ENCODE measurements at regions of chr15 and their contacts with region 1.

Region 1: DNA sequence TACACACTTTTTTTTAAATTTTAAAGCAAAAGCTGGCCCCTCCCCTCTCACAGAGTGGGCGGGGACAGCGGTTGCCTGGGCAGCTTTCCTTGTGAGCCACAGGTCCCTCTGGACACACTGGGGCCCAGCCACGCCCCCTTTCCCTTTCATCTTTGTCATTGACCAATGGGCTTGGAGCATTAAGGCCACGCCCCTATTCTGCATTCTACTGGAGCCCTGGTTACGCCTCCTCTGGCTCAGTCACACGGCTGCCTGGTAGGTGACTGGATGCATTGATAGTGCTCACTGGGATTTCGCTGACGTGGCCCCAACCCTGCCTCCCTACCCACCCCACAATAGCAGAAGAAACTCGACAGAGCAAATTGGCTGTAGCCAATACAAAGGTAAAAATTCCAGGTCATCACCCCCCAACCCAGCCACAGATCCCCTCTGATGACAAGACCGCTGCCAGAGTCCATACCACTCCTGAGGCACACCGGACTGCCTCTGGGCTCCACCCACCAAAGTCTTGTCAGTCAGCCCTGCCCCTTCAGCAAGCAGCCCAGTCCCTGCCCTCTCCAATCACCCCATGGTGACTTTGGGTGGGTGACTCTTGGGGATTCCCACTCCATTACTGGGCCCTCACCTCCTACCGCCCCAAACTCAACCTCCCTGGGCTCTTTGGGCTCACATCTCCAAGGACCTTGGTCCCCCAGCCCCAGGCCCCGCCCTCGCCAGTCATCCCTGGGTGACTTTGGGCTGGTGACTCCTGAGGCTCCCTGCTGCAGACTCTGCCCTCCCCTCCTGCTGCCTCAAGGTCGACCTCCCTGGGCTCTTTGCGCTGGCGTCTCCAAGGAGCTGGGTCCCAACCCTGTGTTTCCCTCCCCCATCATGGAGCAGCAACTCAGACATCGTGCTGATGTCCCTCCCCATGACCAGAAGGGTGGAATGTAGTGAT is 112.2 kb upstream of the FAN1 start:
- DNase-seq: no peak
- ATAC-seq: no peak
- H3K4me3 ChIP-seq: no peak overlapping the region
- H3K4me3 Mint-ChIP-seq: no peak overlapping the region
- H3K27ac ChIP-seq: no peak overlapping the region
- H3K27ac Mint-ChIP-seq: no peak overlapping the region
- H3K4me1 ChIP-seq: no peaks in the 10 kb centered on the region
- H3K4me1 Mint-ChIP-seq: no peaks in the 10 kb centered on the region
- H3K27me3 ChIP-seq: no peaks in the 10 kb centered on the region
- H3K27me3 Mint-ChIP-seq: peaks cover 5% of the 10 kb centered on the region
- CTCF ChIP-seq: no peak

Region 2: DNA sequence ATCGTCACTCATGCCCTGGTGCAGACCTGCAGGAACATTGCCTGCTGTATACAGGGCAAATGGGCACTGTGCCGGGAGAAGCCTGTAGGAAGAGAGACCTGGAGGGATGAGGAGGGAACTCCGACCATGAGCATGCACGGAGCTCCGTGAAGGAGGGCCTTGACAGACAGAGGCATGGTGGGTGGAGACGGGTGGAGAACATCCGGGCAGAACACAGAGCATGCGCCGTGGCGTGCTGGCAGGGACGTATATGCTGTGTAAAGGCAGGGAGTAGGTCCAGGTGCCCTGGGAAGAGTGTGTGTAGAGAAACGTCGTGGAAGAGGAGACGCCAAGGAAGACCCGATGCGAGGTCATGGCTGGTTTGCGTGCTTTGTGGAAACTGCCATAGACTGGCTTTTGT is 20.7 kb before region 1 on chr15:
- CTCF ChIA-PET with region 1: no interaction called
- POLR2A ChIA-PET with region 1: no interaction called
- intact Hi-C with region 1: no loop called
- DNase-seq: no peak
- ATAC-seq: no peak
- H3K4me3 ChIP-seq: no peak overlapping the region
- H3K4me3 Mint-ChIP-seq: no peak overlapping the region
- H3K27ac ChIP-seq: no peak overlapping the region
- H3K27ac Mint-ChIP-seq: no peak overlapping the region
- H3K4me1 ChIP-seq: no peaks in the 10 kb centered on the region
- H3K4me1 Mint-ChIP-seq: no peaks in the 10 kb centered on the region
- H3K27me3 ChIP-seq: no peaks in the 10 kb centered on the region
- H3K27me3 Mint-ChIP-seq: no peaks in the 10 kb centered on the region
- CTCF ChIP-seq: no peak

Region 3: GRCh38 chr15:30859091-30859874 is 67.8 kb after region 1 on chr15:
- CTCF ChIA-PET with region 1: no interaction called
- POLR2A ChIA-PET with region 1: no interaction called
- intact Hi-C with region 1: loop called in 1 of 2 experiments (anchors 5 kb)
- DNase-seq: peak in 6 of 14 experiments; percentile 5 to 54 (median 40)
- ATAC-seq: peak; percentile 49
- H3K4me3 ChIP-seq: no peak overlapping the region
- H3K4me3 Mint-ChIP-seq: no peak overlapping the region
- H3K27ac ChIP-seq: no peak overlapping the region
- H3K27ac Mint-ChIP-seq: no peak overlapping the region
- H3K4me1 ChIP-seq: no peaks in the 10 kb centered on the region
- H3K4me1 Mint-ChIP-seq: peaks cover 9% of the 10 kb centered on the region
- H3K27me3 ChIP-seq: no peaks in the 10 kb centered on the region
- H3K27me3 Mint-ChIP-seq: no peaks in the 10 kb centered on the region
- CTCF ChIP-seq: peak; percentile 83

Measured in CD4-positive, alpha-beta T cell (primary cell).